ENCODE measurements at regions of chr20 and their contacts with region 1.

Region 1: GRCh38 chr20:59222253-59223181 is 58.9 kb downstream of the ZNF831 start:
- DNase-seq: peak; percentile 75 to 90 (median 82)
- ATAC-seq: peak; percentile 95
- H3K4me3 ChIP-seq: peak overlapping the region; percentile 54
- H3K4me3 Mint-ChIP-seq: peak overlapping the region; percentile 71 to 92 (median 86)
- H3K27ac ChIP-seq: peak overlapping the region; percentile 62
- H3K27ac Mint-ChIP-seq: peak overlapping the region; percentile 63 to 94 (median 90)
- H3K4me1 ChIP-seq: peaks cover 5 to 13% of the 10 kb centered on the region in 2 donors
- H3K4me1 Mint-ChIP-seq: peaks cover 14 to 43% (median 32%) of the 10 kb centered on the region in 7 donors
- H3K27me3 ChIP-seq: no peaks in the 10 kb centered on the region
- H3K27me3 Mint-ChIP-seq: peaks cover 0 to 14% (median 0%) of the 10 kb centered on the region in 5 donors

Region 2: DNA sequence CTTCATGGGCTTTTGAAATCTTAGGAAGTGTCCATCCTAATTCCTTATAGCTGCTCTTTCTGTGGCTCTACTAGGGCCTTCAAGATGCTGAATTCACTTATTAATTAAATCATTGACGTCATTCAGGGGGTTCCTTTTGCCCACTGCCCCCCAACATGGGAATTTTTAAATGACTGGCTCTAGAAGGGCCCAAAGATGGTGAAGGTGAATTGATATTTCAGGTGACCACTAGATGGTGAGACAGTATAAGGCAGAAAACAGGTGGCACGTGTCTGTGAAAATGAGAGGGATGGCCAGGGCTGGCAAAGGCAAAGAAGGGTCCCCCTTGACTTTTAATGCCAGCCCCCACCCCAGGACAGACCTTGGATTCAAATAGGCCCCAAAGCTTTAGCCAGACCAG is 358.2 kb before region 1 on chr20:
- CTCF ChIA-PET with region 1: interaction called, 3 read pairs
- POLR2A ChIA-PET with region 1: no interaction called
- intact Hi-C with region 1: loop called in 1 of 2 experiments (anchors 1 kb)
- DNase-seq: peak in 2 of 9 donors; percentile 37 to 39
- ATAC-seq: peak; percentile 45
- H3K4me3 ChIP-seq: no peak overlapping the region
- H3K4me3 Mint-ChIP-seq: no peak overlapping the region
- H3K27ac ChIP-seq: no peak overlapping the region
- H3K27ac Mint-ChIP-seq: no peak overlapping the region
- H3K4me1 ChIP-seq: no peaks in the 10 kb centered on the region
- H3K4me1 Mint-ChIP-seq: no peaks in the 10 kb centered on the region
- H3K27me3 ChIP-seq: peaks cover 0 to 3% of the 10 kb centered on the region in 2 donors
- H3K27me3 Mint-ChIP-seq: peaks cover 6 to 57% (median 16%) of the 10 kb centered on the region in 5 donors

Region 3: DNA sequence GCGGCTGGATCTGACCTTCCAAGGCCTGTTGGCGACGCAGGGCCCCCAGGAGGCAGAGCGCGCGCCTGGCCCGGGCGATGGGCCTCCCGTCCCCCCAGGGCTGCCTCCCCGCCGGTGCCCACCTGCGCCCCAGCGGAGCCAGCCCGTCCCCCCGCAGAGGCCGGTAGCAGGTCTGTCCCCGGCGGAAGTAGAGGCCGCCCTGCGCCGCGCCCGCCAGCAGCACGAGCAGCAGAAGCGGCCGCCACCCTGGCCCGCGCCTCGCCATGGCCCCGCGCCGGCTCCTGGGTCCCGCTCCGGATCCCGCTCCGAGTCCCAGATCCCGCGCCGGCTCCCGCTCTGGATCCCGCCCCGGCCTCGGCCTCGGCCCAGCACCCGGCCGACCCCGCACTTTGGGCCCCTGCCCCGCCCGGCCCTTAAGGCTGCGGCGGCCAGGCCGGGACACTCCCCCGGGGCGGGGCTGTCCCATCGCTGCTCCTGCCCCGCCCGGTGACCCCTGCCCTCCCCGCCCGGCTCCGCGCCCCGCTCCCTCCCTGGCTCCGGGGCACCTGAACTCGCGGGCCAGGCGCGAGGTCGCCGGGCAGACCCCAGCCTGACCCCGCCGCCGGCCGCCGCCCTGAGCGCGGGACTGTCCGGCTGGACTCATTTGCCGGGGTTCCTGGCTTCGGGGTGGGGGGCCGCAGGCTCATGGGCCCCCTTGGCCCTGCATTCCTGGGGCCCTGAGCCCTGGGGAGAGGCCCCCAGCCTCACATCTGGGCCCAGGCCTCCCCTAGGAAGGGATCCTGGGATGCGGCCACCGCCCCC is 215.5 kb before region 1 on chr20 and contains the start of gene CTSZ:
- CTCF ChIA-PET with region 1: no interaction called
- POLR2A ChIA-PET with region 1: no interaction called
- intact Hi-C with region 1: loop called in 1 of 2 experiments (anchors 1 kb)
- DNase-seq: peak in 7 of 9 donors; percentile 22 to 70 (median 36)
- ATAC-seq: peak; percentile 63
- H3K4me3 ChIP-seq: peak within 1 kb of the TSS; percentile 55
- H3K4me3 Mint-ChIP-seq: peak within 1 kb of the TSS; percentile 72 to 89 (median 80)
- H3K27ac ChIP-seq: peak within 1 kb of the TSS; percentile 62
- H3K27ac Mint-ChIP-seq: peak within 1 kb of the TSS in 6 of 9 donors; percentile 36 to 93 (median 62)
- H3K4me1 ChIP-seq: peaks cover 20 to 23% of the 10 kb centered on the region in 2 donors
- H3K4me1 Mint-ChIP-seq: peaks cover 32 to 54% (median 38%) of the 10 kb centered on the region in 7 donors
- H3K27me3 ChIP-seq: no peaks in the 10 kb centered on the region
- H3K27me3 Mint-ChIP-seq: no peaks in the 10 kb centered on the region
- total RNA-seq, gene CTSZ: 29.5 to 165 (median 34.1) TPM

Region 4: GRCh38 chr20:59055295-59055694 is 167.2 kb before region 1 on chr20:
- CTCF ChIA-PET with region 1: no interaction called
- POLR2A ChIA-PET with region 1: no interaction called
- intact Hi-C with region 1: loop called in 1 of 2 experiments (anchors 1 kb)
- DNase-seq: peak in 4 of 9 donors; percentile 5 to 25 (median 14)
- ATAC-seq: no peak
- H3K4me3 ChIP-seq: no peak overlapping the region
- H3K4me3 Mint-ChIP-seq: no peak overlapping the region
- H3K27ac ChIP-seq: no peak overlapping the region
- H3K27ac Mint-ChIP-seq: no peak overlapping the region
- H3K4me1 ChIP-seq: no peaks in the 10 kb centered on the region
- H3K4me1 Mint-ChIP-seq: no peaks in the 10 kb centered on the region
- H3K27me3 ChIP-seq: peaks cover 4 to 5% of the 10 kb centered on the region in 2 donors
- H3K27me3 Mint-ChIP-seq: peaks cover 10 to 59% (median 15%) of the 10 kb centered on the region in 5 donors

Region 5: DNA sequence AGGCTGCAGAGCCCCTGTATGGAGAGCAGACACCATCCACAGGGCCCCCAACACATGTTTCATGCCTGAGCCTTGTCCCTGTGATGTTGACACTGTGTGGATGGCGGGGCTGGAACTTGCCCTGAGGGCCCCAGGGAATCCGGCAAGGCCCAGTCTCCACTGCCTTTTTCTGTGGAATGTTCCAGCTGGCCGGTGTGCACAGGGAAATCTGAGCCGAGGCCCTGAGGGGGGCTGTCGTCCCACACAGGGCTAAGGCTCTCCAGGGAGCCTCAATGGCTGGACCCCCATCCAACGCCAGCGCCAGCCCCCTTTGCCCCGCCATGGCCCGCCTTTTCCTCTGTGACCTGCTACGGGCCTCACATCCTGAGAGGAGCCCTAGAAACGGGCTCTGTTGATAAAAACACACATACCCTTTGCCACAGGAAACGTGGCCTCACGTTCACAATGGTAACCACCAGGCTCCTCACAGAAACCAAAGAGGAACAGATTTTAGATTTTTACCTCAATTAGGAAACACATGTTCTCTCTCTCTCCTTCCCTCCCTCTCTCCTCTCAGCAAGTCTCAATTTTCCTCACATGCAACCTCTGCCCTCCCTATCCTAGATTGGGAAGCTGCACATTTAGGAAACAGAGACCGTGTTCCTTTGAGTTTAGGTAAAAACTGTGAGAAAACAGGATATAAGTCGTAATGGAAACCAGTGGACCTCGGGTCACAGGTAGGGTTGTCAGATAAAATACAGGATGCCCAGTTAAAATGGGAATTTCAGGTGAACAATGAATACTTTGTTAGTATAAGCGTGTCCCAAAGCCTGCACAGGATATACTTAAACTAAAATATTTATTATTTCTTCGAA is 72.6 kb before region 1 on chr20:
- CTCF ChIA-PET with region 1: interaction called, 3 read pairs
- POLR2A ChIA-PET with region 1: interaction called, 3 read pairs
- intact Hi-C with region 1: loop called in 1 of 2 experiments (anchors 5 kb)
- DNase-seq: peak; percentile 51 to 93 (median 88)
- ATAC-seq: peak; percentile 91
- H3K4me3 ChIP-seq: peak overlapping the region; percentile 33
- H3K4me3 Mint-ChIP-seq: peak overlapping the region; percentile 56 to 91 (median 82)
- H3K27ac ChIP-seq: peak overlapping the region; percentile 98
- H3K27ac Mint-ChIP-seq: peak overlapping the region; percentile 96 to 100 (median 99)
- H3K4me1 ChIP-seq: peaks cover 83% of the 10 kb centered on the region in 2 donors
- H3K4me1 Mint-ChIP-seq: peaks cover 53 to 98% (median 94%) of the 10 kb centered on the region in 7 donors
- H3K27me3 ChIP-seq: no peaks in the 10 kb centered on the region
- H3K27me3 Mint-ChIP-seq: no peaks in the 10 kb centered on the region

Region 6: GRCh38 chr20:59253779-59254319 is 31.3 kb after region 1 on chr20:
- CTCF ChIA-PET with region 1: no interaction called
- POLR2A ChIA-PET with region 1: interaction called, 5 read pairs
- intact Hi-C with region 1: loop called in 1 of 2 experiments (anchors 1 kb)
- DNase-seq: peak in 7 of 9 donors; percentile 10 to 41 (median 25)
- ATAC-seq: peak; percentile 63
- H3K4me3 ChIP-seq: peak overlapping the region; percentile 27
- H3K4me3 Mint-ChIP-seq: peak overlapping the region; percentile 66 to 83 (median 73)
- H3K27ac ChIP-seq: peak overlapping the region; percentile 58
- H3K27ac Mint-ChIP-seq: peak overlapping the region; percentile 83 to 97 (median 93)
- H3K4me1 ChIP-seq: peaks cover 43 to 45% of the 10 kb centered on the region in 2 donors
- H3K4me1 Mint-ChIP-seq: peaks cover 50 to 82% (median 66%) of the 10 kb centered on the region in 7 donors
- H3K27me3 ChIP-seq: no peaks in the 10 kb centered on the region
- H3K27me3 Mint-ChIP-seq: no peaks in the 10 kb centered on the region

Measured in naive thymus-derived CD4-positive, alpha-beta T cell (primary cell).